ENCODE measurements at regions of chr4 and their contacts with region 1.

Region 1: DNA sequence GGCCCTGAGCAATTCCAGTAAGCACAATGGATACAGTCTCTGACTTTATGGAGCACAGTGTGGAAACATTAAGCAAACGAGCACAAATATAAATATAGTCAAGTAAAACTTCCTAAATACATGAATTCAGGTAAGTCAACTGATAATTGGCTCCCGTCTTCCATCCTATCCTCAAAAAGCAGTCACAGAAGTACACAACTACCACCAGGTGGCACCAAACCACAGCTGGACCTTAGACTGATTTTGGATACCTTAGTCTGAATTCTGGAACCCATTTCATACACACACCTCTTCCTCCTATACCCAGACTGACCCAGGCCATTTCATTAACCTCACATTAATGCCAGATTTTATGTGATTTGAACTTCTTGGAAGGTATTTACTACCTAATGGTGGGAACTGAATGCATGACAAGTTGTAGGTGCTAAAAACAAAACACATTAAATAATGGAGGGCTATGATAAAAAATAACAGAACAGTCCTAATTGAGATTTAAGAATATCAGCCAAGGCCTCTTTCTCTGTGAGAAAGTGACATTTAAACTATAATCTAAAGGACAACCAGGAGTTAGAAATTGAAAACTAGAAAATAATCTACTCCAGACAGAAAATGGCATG is 77.5 kb downstream of the ELF2 start:
- DNase-seq: peak; percentile 51
- H3K4me3 Mint-ChIP-seq: no peak overlapping the region
- H3K27ac Mint-ChIP-seq: no peak overlapping the region
- H3K4me1 Mint-ChIP-seq: no peaks in the 10 kb centered on the region
- H3K27me3 Mint-ChIP-seq: no peaks in the 10 kb centered on the region

Region 2: DNA sequence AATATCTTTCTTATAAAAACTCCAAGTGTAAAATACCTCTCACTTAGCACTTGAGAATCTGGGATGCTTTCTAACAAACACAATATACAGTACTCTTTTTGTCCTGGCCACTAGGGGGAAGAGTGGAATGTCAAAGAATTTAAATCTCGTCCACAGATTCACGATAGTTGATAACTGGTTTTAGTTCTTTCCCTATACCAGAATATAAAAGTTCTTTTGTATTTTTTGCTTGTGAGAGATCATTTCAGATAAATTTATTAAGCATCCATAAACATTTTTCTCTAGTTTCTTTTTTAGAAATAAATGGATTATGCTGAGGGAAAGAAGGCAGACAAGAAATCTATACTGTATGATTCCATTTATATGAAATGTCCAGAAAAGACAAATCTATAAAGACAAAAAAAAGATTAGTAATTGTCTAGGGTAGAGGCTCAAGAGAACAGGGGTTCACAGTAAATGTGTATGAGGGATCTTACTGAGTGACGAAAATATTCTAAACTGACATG is 130.1 kb after region 1 on chr4:
- intact Hi-C with region 1: loop called (anchors 1 kb)
- DNase-seq: no peak
- H3K4me3 Mint-ChIP-seq: no peak overlapping the region
- H3K27ac Mint-ChIP-seq: no peak overlapping the region
- H3K4me1 Mint-ChIP-seq: peaks cover 3% of the 10 kb centered on the region
- H3K27me3 Mint-ChIP-seq: no peaks in the 10 kb centered on the region

Measured in activated T-helper 2 cell treated with anti-CD3 and anti-CD28 coated beads, Interferon-gamma antibody, Interleukin-2, Interleukin-4, amounts not matched to agents 10 μg/mL and 5 μg/mL and 100 μg/mL, durations not matched to agents 14 hours and 24 hours and 36 hours (primary cell).